ENCODE measurements at regions of chr1 and their contacts with region 1.

Region 1: DNA sequence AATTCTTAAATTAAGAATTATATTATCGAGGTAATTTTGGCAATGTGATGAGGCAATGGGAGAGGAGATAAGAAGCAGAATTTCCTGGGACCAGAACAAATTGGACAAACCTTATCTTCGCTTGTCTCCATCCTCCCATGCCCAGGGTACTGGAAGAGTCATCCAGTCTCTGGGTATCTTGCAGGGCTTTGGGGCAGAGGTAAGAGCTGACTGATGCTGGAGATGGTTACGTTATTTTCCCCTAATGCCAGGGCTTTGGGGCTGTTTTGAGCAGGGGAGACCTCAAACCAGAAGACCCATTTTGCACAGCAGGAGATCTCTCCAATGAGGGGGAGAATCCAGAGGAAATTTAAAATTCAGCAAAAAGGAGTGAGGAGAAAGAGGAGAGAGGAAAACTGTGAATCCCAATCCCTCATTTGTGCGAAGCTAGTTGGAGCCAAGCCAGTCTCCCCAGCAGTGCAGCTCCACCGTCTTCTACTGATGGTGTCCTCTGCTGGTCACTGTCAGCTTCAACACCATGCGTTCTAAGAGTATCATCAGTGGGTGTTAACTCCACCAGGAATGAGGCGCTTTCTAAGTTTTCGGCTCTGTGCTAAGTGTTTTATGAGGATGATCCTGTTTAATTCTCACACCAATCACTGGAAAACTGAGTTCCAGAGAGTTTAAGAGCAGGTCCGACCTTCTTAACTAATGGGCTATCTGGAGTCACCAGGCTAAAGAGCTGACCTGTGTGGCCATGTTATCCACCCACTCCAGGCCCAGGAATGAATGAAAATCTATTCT is 86.8 kb upstream of the CD34 start:
- DNase-seq: peak; percentile 84 to 87
- H3K4me3 ChIP-seq: no peak overlapping the region
- H3K27ac ChIP-seq: no peak overlapping the region
- H3K4me1 ChIP-seq: no peaks in the 10 kb centered on the region
- H3K27me3 ChIP-seq: no peaks in the 10 kb centered on the region
- CTCF ChIP-seq: peak; percentile 53 to 82 (median 76)
- POLR2A ChIP-seq: no peak

Region 2: GRCh38 chr1:207885129-207886032 is 112.3 kb before region 1 on chr1:
- intact Hi-C with region 1: loop called (anchors 10 kb)
- DNase-seq: peak; percentile 83 to 88
- H3K4me3 ChIP-seq: no peak overlapping the region
- H3K27ac ChIP-seq: peak overlapping the region in 2 of 3 donors; percentile 45 to 67
- H3K4me1 ChIP-seq: peaks cover 8 to 31% of the 10 kb centered on the region in 2 donors
- H3K27me3 ChIP-seq: no peaks in the 10 kb centered on the region
- CTCF ChIP-seq: peak; percentile 87 to 97 (median 92)
- POLR2A ChIP-seq: peak in 1 of 2 donors; percentile 36

Region 3: DNA sequence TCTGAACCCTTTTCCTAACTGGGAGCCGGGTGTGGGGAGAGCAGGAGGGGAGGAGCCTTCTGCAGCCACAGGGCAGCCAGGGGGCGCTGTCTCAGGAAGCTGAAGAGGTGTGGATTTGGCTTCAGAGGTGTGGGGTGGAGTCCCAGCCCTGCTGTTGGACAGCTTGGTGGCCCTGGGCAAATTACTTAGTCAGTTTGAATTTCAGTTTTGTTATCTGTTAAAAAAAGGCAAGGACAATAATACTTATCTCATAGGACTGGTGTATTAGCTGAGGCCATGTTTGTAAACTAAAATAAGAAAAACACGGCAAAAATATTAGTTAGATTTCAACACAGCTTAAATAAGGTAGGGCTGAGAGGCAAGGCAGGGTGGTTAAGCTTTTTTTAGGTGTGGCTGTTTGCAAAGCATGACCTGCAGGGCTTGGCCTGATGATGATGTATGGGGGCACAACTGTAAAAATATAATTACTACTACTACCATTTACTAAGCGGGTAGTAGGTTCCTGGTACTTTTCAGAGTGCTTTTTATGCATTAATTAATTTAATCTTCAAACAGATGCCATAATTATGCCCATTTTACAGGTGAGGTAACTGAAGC is 134.7 kb after region 1 on chr1:
- intact Hi-C with region 1: no loop called
- DNase-seq: peak; percentile 89 to 90
- H3K4me3 ChIP-seq: no peak overlapping the region
- H3K27ac ChIP-seq: peak overlapping the region in 1 of 3 donors; percentile 42
- H3K4me1 ChIP-seq: peaks cover 25 to 28% of the 10 kb centered on the region in 2 donors
- H3K27me3 ChIP-seq: no peaks in the 10 kb centered on the region
- CTCF ChIP-seq: peak; percentile 61 to 90 (median 80)
- POLR2A ChIP-seq: no peak

Region 4: GRCh38 chr1:208159555-208160258 is 162.0 kb after region 1 on chr1:
- intact Hi-C with region 1: no loop called
- DNase-seq: no peak
- H3K4me3 ChIP-seq: no peak overlapping the region
- H3K27ac ChIP-seq: no peak overlapping the region
- H3K4me1 ChIP-seq: peaks cover 15 to 54% of the 10 kb centered on the region in 2 donors
- H3K27me3 ChIP-seq: no peaks in the 10 kb centered on the region
- CTCF ChIP-seq: no peak
- POLR2A ChIP-seq: no peak

Region 5: DNA sequence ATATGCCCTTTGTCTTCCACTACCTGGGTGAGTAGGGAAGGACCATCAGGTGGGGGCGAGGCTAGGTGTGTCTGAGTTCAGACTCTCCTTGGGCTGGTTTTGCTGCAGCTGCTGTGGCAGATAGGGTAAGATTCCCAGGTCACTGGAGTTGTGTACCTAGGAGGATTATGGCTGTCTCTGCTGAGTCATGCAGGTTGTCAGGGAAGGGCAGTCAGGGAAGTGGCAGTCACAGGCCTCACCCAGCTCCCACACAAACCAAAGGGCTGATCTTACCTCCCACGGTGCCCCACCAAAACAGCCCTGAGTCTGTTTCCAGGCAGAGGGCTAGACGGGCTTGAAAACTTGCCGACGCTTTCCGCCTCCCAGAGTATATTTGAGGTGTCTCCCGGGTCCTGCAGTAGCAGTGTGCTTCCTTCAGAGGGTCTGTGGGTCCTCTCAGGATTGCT is 448.1 kb after region 1 on chr1:
- intact Hi-C with region 1: no loop called
- DNase-seq: peak in 1 of 2 donors; percentile 10
- H3K4me3 ChIP-seq: no peak overlapping the region
- H3K27ac ChIP-seq: no peak overlapping the region
- H3K4me1 ChIP-seq: no peaks in the 10 kb centered on the region
- H3K27me3 ChIP-seq: no peaks in the 10 kb centered on the region
- CTCF ChIP-seq: no peak
- POLR2A ChIP-seq: no peak